Activated CD4-positive, alpha-beta T cell treated with anti-CD3 and anti-CD28 coated beads, Interleukin-2, amount 10 ng/mL, durations not matched to agents 24 days and 14 days (primary cell): ENCODE measurements at regions of chr13 and their contacts with region 1.

Region 1: DNA sequence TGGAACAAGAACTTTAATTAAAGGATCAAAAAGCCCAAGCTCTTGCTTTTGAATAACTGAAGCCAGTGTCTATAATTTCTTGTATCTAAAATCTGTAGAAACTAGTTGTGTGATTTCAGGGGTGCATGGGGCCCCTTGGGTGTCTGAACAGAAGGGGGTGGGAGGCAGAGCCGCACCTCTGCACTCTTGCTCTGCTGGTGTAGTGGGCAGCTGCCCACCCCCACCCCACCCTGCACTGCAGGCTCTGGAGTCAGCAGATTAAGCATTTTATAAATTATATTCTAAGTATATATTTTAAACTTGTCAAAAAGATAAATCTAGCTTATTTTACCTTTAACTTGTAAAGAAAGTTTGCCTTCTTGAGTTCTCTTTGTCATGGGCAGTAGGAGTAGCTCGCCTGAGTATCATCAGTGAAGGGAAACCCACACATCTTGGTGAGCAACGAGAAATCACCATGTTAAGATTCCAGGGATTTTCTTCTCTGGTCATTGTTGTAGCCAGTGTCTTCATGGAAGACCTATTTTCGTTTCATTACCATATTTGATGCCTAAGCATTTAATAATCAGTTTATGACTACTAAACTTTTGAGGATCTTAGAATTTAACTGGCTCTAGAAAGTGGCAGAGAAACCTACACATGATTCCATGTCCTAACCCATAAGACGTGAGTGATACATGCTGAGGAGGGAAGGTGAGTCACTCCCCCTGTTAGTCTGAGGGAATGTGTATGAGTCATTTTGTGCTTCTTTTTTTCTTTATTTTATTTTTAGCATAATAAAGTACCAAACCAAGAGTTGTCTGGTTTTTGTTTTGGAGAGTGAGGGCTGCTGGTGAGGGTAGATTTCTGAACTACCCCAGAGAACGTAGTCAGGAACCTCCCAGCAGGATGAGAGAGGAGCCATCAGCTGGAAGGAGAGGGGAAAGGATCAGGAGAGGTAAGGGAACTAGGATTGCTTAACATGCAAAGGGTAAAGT is 7.7 kb downstream of the UBE2L5 start:
- DNase-seq: no peak
- H3K4me3 Mint-ChIP-seq: peak overlapping the region; percentile 63
- H3K27ac Mint-ChIP-seq: peak overlapping the region; percentile 91
- H3K4me1 Mint-ChIP-seq: peaks cover 28% of the 10 kb centered on the region
- H3K27me3 Mint-ChIP-seq: no peaks in the 10 kb centered on the region

Region 2: DNA sequence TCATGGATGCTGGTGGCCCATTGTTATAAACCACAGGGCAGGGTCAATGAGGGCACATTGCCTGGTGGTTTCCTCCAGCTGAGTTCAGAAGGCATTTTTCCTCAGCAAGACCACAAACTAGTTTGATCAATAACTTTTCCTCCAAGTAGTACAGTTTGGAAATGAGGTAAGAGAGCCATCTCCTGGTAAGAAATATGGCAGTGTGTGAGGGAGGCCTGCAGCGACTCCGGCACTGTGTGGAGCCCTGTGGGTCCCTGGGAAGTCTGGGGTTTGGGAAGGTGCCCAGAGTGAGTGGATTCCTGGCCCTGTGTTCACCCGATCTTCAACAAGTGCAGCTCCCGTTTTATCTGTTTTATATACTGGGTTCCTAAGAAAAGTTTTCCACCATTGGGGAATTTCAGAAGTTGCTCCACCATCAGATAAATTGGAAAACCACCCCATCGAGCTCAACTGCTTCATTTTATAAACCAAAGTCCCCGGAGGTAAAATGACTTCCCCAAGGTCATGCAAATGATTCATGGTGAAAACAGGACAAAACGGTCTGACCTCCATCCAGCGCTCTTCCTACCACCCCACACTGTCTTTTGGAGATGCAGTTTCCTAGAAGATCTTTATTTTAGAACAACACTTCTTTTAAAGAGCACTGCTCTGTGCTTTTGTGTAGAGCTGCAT is 271.1 kb before region 1 on chr13:
- intact Hi-C with region 1: loop called (anchors 5 kb)
- DNase-seq: peak; percentile 75
- H3K4me3 Mint-ChIP-seq: peak overlapping the region; percentile 77
- H3K27ac Mint-ChIP-seq: peak overlapping the region; percentile 91
- H3K4me1 Mint-ChIP-seq: peaks cover 42% of the 10 kb centered on the region
- H3K27me3 Mint-ChIP-seq: peaks cover 2% of the 10 kb centered on the region

Region 3: GRCh38 chr13:30440910-30441703 is 11.1 kb after region 1 on chr13:
- intact Hi-C with region 1: loop called (anchors 1 kb)
- DNase-seq: no peak
- H3K4me3 Mint-ChIP-seq: no peak overlapping the region
- H3K27ac Mint-ChIP-seq: peak overlapping the region; percentile 49
- H3K4me1 Mint-ChIP-seq: peaks cover 10% of the 10 kb centered on the region
- H3K27me3 Mint-ChIP-seq: peaks cover 16% of the 10 kb centered on the region